ENCODE measurements at regions of chr7 and their contacts with region 1.

Region 1: GRCh38 chr7:98400542-98401340 is at the start of gene BAIAP2L1:
- DNase-seq: peak; percentile 24 to 66
- ATAC-seq: peak; percentile 63 to 84
- H3K4me3 ChIP-seq: peak within 1 kb of the TSS; percentile 36 to 74 (median 56)
- H3K27ac ChIP-seq: peak within 1 kb of the TSS; percentile 30 to 74 (median 62)
- H3K4me1 ChIP-seq: peaks cover 10 to 11% of the 10 kb centered on the region in 2 donors
- H3K27me3 ChIP-seq: peaks cover 0 to 25% (median 20%) of the 10 kb centered on the region in 3 donors
- CTCF ChIP-seq: no peak
- POLR2A ChIP-seq: peak in 1 of 2 donors; percentile 24
- total RNA-seq, gene BAIAP2L1: 0.59 to 3.8 (median 1.2) TPM

Region 2: GRCh38 chr7:98251841-98252639 is 148.7 kb before region 1 on chr7 and contains the start of gene TECPR1:
- in situ Hi-C with region 1: loop called in 1 of 4 experiments (anchors 25 kb)
- intact Hi-C with region 1: loop called (anchors 2 kb)
- DNase-seq: peak; percentile 94 to 95
- ATAC-seq: peak; percentile 94 to 96
- H3K4me3 ChIP-seq: peak within 1 kb of the TSS; percentile 74 to 93 (median 86)
- H3K27ac ChIP-seq: peak within 1 kb of the TSS; percentile 85 to 94 (median 88)
- H3K4me1 ChIP-seq: peaks cover 18 to 28% of the 10 kb centered on the region in 2 donors
- H3K27me3 ChIP-seq: no peaks in the 10 kb centered on the region
- CTCF ChIP-seq: peak in 1 of 5 experiments; percentile 18
- POLR2A ChIP-seq: peak; percentile 45 to 60
- total RNA-seq, gene TECPR1: 16.0 to 59.6 (median 33.9) TPM

Region 3: DNA sequence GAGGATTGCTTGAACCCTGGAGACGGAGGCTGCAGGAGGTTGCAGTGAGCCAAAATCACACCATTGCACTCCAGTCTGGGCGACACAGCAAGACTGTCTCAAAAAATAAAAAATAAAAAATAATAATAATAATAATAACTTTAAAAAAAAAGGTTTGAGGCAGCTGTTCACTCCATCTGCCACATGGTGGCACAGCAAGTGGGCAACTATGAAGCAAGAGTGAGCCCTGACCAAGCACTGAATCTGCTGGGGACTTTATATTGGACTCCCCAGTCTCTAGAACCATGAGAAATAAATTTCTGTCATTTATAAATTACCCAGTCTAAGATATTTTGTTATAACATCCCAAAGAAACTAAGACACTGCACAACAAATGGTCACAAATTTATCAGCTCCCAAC is 133.9 kb before region 1 on chr7:
- in situ Hi-C with region 1: loop called in 1 of 4 experiments (anchors 25 kb)
- intact Hi-C with region 1: loop called (anchors 5 kb)
- DNase-seq: no peak
- ATAC-seq: peak in 1 of 2 donors; percentile 61
- H3K4me3 ChIP-seq: no peak overlapping the region
- H3K27ac ChIP-seq: no peak overlapping the region
- H3K4me1 ChIP-seq: no peaks in the 10 kb centered on the region
- H3K27me3 ChIP-seq: no peaks in the 10 kb centered on the region
- CTCF ChIP-seq: peak; percentile 16 to 51 (median 31)
- POLR2A ChIP-seq: no peak